A673 (cell line): ENCODE measurements at regions of chr1 and their contacts with region 1.

Region 1: GRCh38 chr1:101971304-101971703 is 25.4 kb downstream of the OLFM3 start:
- DNase-seq: peak; percentile 68
- H3K4me3 ChIP-seq: no peak overlapping the region
- H3K27ac ChIP-seq: peak overlapping the region; percentile 40
- H3K4me1 ChIP-seq: peaks cover 41% of the 10 kb centered on the region
- H3K27me3 ChIP-seq: no peaks in the 10 kb centered on the region
- CTCF ChIP-seq: peak; percentile 77

Region 2: DNA sequence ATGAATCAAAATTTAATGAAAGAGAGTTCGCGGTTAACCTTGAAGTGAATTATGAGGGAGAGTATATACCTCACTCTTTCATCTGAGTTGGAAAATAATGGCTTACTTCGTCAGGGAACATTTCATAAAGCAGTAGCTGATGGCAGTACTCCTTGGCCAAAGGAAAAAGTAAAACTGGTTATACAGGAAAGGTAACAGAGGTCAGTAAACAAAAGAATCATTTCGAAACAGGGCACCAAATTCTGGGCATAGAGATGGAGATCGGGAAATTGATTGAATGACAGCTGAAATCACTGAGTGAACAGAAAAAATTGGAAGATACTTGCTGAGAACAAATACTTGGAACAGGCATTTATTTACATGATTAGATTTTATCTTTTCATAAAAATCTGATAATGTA is 173.6 kb before region 1 on chr1:
- CTCF ChIA-PET with region 1: no interaction called
- POLR2A ChIA-PET with region 1: no interaction called
- intact Hi-C with region 1: no loop called
- DNase-seq: no peak
- H3K4me3 ChIP-seq: no peak overlapping the region
- H3K27ac ChIP-seq: no peak overlapping the region
- H3K4me1 ChIP-seq: peaks cover 4% of the 10 kb centered on the region
- H3K27me3 ChIP-seq: no peaks in the 10 kb centered on the region
- CTCF ChIP-seq: no peak

Region 3: GRCh38 chr1:101846820-101847219 is 124.5 kb before region 1 on chr1:
- CTCF ChIA-PET with region 1: no interaction called
- POLR2A ChIA-PET with region 1: no interaction called
- intact Hi-C with region 1: loop called (anchors 5 kb)
- DNase-seq: peak; percentile 86
- H3K4me3 ChIP-seq: peak overlapping the region; percentile 38
- H3K27ac ChIP-seq: peak overlapping the region; percentile 45
- H3K4me1 ChIP-seq: peaks cover 64% of the 10 kb centered on the region
- H3K27me3 ChIP-seq: no peaks in the 10 kb centered on the region
- CTCF ChIP-seq: peak; percentile 29